ENCODE measurements at regions of chr2 and their contacts with region 1.

Region 1: GRCh38 chr2:237572021-237572741 is 5.8 kb downstream of the PRLH start:
- DNase-seq: peak; percentile 81 to 94
- H3K4me3 ChIP-seq: no peak overlapping the region
- H3K27ac ChIP-seq: no peak overlapping the region
- H3K4me1 ChIP-seq: peaks cover 5% of the 10 kb centered on the region; the same call in 1 of the 2 replicates
- H3K27me3 ChIP-seq: no peaks in the 10 kb centered on the region
- CTCF ChIP-seq: peak; percentile 100

Region 2: DNA sequence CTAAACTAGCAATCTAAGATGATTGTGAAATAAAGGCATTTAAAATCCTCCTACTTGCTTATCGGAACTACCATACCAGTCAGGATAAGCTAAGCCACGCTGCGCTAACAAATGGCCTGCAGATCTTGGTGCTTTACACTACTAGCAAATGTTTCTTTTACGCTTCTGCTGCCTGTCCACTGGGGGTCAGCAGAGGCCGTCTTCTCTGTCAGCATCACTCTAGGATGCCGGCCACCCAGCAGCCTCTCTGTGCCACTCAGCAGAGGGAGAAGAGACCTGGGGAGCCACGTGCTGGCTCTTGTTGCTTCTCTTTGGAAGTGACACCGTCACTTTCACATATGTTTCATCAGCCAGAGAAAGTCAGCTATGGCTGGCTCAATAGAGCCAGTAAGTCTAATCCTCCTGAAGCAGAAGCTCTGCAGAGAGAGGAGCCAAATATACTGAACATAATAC is 449.9 kb before region 1 on chr2:
- CTCF ChIA-PET with region 1: interaction called, 3 read pairs
- POLR2A ChIA-PET with region 1: no interaction called
- intact Hi-C with region 1: loop called (anchors 1 kb)
- DNase-seq: peak; percentile 55 to 67
- H3K4me3 ChIP-seq: no peak overlapping the region
- H3K27ac ChIP-seq: peak overlapping the region; percentile 44
- H3K4me1 ChIP-seq: peaks cover 19% of the 10 kb centered on the region; the same call in 1 of the 2 replicates
- H3K27me3 ChIP-seq: no peaks in the 10 kb centered on the region
- CTCF ChIP-seq: peak; percentile 79

Region 3: DNA sequence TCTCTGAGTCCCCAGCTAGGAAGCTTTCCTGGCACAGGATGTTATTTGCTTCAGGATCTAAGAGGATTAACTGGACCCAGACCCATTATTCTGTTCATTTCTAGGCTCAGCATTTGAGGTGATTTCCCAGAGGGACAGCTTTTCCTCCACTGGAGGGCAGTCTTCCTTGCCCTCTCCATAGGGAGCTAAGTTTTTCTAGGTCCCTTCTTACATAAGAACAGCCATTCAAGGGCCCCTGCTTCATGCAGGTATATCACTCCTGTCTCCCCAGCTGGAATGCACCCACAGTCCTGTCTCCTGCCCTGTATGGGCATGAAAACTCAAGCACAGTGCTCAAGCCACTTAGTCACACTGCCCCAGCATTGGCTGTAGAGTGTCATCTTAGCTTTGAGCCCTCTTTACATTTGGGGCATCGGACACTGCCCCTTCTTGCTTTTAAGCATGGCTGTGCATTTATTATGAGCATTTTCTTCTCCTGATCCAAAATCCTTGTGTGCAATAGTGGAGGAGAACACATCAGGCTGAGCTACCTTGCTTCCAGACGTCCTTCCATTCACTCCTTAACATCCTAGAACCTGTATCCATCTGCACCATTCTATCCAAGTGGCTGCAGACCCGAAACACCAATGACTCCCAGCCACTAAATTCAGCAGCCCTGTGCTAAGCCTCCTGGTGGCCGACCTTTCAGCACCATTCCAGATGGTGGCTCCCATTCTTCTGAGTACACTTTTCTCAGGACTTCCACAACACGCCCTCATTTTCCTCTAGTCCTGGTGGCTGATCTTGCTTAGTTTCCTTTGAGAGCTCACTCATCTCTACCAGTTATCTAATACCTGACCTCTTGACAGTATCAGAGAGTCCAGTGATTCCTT is 406.5 kb before region 1 on chr2:
- CTCF ChIA-PET with region 1: interaction called, 10 read pairs
- POLR2A ChIA-PET with region 1: no interaction called
- intact Hi-C with region 1: no loop called
- DNase-seq: no peak
- H3K4me3 ChIP-seq: no peak overlapping the region
- H3K27ac ChIP-seq: no peak overlapping the region
- H3K4me1 ChIP-seq: no peaks in the 10 kb centered on the region
- H3K27me3 ChIP-seq: no peaks in the 10 kb centered on the region
- CTCF ChIP-seq: peak; percentile 82

Region 4: DNA sequence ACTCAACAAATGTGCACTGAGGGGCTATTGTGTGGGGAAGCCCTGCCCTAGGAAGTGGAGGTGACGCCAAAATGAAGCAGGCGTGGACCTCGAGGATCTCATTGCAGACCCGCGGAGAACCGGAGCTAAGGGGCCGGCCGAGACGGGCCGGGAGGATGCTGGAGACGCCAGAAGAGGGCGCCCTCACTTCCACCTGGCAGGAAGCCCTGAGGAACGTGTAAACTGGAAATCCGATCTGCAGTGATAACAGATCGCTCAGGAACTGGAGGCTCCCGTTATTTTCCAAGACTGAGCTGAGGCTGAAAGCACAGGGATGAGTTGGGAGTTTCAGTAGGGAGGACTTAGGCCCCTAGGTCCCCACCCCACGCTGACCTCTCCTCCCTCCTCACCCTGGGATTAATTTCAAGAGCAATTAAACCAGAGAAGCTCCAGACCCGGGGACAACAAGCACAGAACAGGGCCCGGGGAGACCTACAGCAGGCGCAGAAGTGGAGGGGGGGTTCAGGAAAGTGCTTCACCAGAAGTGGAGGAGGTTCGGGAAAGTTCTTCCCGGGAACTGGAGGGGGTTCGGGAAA is 150.6 kb before region 1 on chr2:
- CTCF ChIA-PET with region 1: interaction called, 12 read pairs
- POLR2A ChIA-PET with region 1: no interaction called
- intact Hi-C with region 1: loop called (anchors 1 kb)
- DNase-seq: peak; percentile 62 to 87
- H3K4me3 ChIP-seq: peak overlapping the region; percentile 32; the same call in 1 of the 2 replicates
- H3K27ac ChIP-seq: no peak overlapping the region
- H3K4me1 ChIP-seq: no peaks in the 10 kb centered on the region; the same call in 1 of the 2 replicates
- H3K27me3 ChIP-seq: no peaks in the 10 kb centered on the region
- CTCF ChIP-seq: peak; percentile 91